Lower leg skin (tissue), 4 donors: ENCODE measurements at regions of chr14 and their contacts with region 1.

Region 1: DNA sequence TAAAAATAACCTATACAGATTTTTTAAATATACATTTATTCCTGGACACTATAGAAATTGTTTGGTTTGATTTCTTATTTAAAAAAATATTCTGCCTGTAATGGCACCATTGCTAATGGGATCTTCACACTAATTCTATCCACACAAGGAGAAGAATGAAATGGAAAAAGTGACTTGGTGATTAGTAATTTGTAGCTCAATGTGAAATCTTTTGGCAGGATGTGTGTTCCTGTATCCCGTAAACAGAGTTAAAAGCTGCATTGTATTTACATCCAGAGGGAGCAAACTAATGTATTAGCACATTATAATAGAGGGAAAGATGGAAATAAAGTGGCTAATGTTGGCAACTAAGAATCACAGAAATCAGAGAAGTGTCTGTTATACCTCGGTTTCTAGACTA is 1455.3 kb upstream of the FLRT2 start:
- DNase-seq: no peak
- H3K4me3 ChIP-seq: no peak overlapping the region
- CTCF ChIP-seq: no peak
- POLR2A ChIP-seq: no peak

Region 2: DNA sequence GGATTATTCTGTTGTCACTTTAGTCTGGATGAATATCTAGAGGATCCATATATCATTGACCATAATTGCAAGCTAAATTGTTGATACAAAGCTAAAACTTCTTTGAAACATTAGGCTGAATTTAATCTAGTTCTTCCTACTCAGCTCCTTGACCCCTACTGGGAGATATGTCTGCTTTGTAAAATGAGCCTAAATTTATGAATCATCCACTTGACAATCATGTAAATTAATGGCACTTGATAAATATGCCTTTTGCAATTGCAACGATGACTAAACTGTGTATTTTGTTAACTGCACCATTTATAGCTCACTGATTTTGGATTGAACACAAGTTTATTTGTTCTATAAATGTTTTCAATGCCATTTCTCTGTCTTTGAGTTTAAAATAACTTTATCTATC is 161.2 kb before region 1 on chr14:
- intact Hi-C with region 1: loop called (anchors 5 kb)
- DNase-seq: no peak
- H3K4me3 ChIP-seq: no peak overlapping the region
- CTCF ChIP-seq: no peak
- POLR2A ChIP-seq: no peak

Region 3: DNA sequence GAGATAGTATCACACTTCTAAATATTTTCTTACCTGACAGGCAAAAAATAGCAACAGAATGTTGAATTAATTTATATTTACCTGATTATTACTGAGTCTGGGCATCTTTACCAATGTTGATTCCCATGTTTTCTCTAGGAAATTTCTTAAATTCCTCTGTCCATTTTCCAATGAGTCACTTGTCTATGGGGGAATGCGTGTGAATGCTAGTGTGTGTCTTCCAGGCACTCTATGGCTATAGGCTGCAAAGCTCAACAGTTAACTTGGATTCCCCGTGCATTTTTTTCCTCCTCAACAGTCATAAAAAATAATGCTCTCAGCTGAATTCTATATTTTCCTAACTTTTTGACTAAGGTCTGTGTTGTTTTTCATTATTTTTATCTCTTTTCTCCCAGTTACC is 69.5 kb after region 1 on chr14:
- intact Hi-C with region 1: no loop called
- DNase-seq: no peak
- H3K4me3 ChIP-seq: no peak overlapping the region
- CTCF ChIP-seq: no peak
- POLR2A ChIP-seq: no peak